CD4-positive, alpha-beta memory T cell (primary cell): ENCODE measurements at regions of chr14 and their contacts with region 1.

Region 1: GRCh38 chr14:63770187-63770807 is 42.4 kb upstream of the SGPP1 start:
- DNase-seq: peak; percentile 59 to 63 (median 60)
- H3K4me3 ChIP-seq: no peak overlapping the region
- H3K4me3 Mint-ChIP-seq: no peak overlapping the region
- H3K27ac ChIP-seq: no peak overlapping the region
- H3K27ac Mint-ChIP-seq: no peak overlapping the region
- H3K4me1 ChIP-seq: no peaks in the 10 kb centered on the region
- H3K4me1 Mint-ChIP-seq: peaks cover 3 to 5% (median 4%) of the 10 kb centered on the region in 4 donors
- H3K27me3 ChIP-seq: no peaks in the 10 kb centered on the region
- H3K27me3 Mint-ChIP-seq: no peaks in the 10 kb centered on the region

Region 2: DNA sequence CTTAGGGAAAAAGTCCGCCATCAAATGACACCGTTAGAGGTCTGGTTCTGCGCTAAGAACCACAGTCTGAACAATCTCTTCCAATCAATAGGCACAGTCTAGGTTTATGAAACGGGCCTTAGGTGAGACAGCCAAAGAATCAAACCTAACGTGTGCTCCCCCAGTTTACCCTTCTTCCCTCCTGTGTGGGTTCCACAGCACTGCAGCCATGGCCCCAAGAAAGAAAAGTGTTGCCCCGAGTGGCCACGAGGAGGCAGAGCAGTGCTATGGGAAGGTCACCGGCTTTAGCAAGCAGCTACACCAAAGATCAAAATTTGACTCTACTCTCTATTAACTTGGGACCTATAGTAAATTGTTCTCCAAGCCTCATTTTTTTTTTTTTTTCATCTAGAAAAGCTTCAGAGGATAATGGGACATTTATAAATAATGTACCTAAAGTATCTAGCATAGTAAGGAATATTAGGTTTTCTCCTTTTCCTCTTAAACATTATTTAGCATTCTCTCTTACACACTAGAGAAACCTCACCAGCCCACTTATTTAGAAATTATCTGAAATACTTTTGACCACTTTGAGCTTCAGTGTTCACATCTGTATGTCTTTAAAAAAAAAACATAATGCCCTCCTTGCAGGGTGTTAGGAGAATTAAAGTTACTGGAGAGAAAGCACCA is 381.4 kb before region 1 on chr14:
- CTCF ChIA-PET with region 1: interaction called, 20 read pairs
- POLR2A ChIA-PET with region 1: interaction called, 4 read pairs
- intact Hi-C with region 1: no loop called
- DNase-seq: peak; percentile 26 to 37 (median 32)
- H3K4me3 ChIP-seq: no peak overlapping the region
- H3K4me3 Mint-ChIP-seq: no peak overlapping the region
- H3K27ac ChIP-seq: no peak overlapping the region
- H3K27ac Mint-ChIP-seq: peak overlapping the region in 1 of 7 donors; percentile 57
- H3K4me1 ChIP-seq: peaks cover 4% of the 10 kb centered on the region
- H3K4me1 Mint-ChIP-seq: peaks cover 0 to 5% (median 1%) of the 10 kb centered on the region in 4 donors
- H3K27me3 ChIP-seq: no peaks in the 10 kb centered on the region
- H3K27me3 Mint-ChIP-seq: no peaks in the 10 kb centered on the region

Region 3: DNA sequence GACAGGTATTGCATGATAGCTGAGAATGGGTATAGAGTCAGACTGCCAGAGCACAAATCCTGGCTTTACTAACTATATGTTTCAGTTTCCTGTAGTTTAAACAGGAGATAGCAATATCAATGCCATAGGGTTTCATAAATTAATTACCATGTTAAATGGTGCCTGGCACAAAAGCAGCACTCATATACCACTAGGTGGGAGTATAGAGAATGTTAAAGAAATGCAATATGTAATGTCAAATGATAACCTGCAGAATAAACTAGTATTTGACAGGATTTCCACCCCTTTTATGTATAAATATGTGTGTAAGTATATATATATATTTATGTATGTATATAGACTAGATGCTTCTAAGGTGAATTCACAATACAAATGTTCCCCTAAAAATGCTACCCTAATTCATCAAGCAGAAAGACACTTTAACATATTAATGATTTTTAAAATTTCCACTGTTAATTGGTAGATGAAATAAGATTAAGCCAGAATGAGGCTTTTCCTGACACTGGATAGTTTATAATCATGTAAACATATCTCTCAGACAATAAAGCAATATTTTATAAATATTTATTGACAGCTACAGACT is 137.3 kb before region 1 on chr14:
- CTCF ChIA-PET with region 1: interaction called, 132 read pairs
- POLR2A ChIA-PET with region 1: interaction called, 5 read pairs
- intact Hi-C with region 1: loop called (anchors 1 kb)
- DNase-seq: peak in 4 of 5 donors; percentile 51 to 57 (median 52)
- H3K4me3 ChIP-seq: no peak overlapping the region
- H3K4me3 Mint-ChIP-seq: no peak overlapping the region
- H3K27ac ChIP-seq: no peak overlapping the region
- H3K27ac Mint-ChIP-seq: peak overlapping the region in 1 of 7 donors; percentile 47
- H3K4me1 ChIP-seq: peaks cover 18% of the 10 kb centered on the region
- H3K4me1 Mint-ChIP-seq: peaks cover 25 to 44% (median 35%) of the 10 kb centered on the region in 4 donors
- H3K27me3 ChIP-seq: no peaks in the 10 kb centered on the region
- H3K27me3 Mint-ChIP-seq: no peaks in the 10 kb centered on the region

Region 4: DNA sequence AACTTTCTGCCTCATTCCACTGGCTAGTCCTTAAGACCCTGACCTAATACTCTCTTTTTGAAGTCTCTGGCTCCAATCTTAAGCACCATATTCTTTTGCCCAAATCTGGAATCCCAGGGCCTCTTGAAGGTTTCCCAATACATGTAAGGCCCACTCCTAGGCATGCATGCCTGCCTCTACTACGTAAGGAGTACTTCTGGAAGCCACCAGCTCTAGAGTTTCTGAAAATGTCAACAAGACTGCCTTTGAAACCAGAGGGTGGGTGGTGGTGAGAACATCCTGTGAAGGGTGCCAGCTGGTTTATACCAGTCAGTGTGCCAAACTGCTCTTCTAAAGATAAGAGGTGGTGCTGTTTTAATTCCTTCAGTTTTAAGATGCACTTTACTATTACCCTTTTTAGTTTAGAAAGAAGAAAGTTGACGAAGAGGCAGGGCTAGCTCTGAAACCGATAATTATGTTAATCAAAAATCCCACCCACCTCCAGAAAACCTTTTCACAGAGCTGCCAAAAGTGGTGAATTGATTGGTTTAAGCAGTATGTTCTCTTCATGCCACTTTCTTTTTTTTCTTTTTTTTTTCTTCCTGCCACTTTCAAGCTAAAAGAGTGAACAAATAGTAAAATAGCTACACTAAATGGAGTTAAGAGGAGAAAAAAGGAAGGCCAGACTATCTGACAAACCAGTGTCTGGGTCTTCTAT is 119.9 kb before region 1 on chr14:
- CTCF ChIA-PET with region 1: interaction called, 19 read pairs
- POLR2A ChIA-PET with region 1: no interaction called
- intact Hi-C with region 1: no loop called
- DNase-seq: peak; percentile 72 to 79 (median 74)
- H3K4me3 ChIP-seq: peak overlapping the region in 1 of 2 donors; percentile 1
- H3K4me3 Mint-ChIP-seq: peak overlapping the region in 7 of 8 donors; percentile 66 to 80 (median 77)
- H3K27ac ChIP-seq: peak overlapping the region; percentile 56
- H3K27ac Mint-ChIP-seq: peak overlapping the region; percentile 92 to 100 (median 97)
- H3K4me1 ChIP-seq: peaks cover 41% of the 10 kb centered on the region
- H3K4me1 Mint-ChIP-seq: peaks cover 19 to 39% (median 29%) of the 10 kb centered on the region in 4 donors
- H3K27me3 ChIP-seq: no peaks in the 10 kb centered on the region
- H3K27me3 Mint-ChIP-seq: no peaks in the 10 kb centered on the region

Region 5: DNA sequence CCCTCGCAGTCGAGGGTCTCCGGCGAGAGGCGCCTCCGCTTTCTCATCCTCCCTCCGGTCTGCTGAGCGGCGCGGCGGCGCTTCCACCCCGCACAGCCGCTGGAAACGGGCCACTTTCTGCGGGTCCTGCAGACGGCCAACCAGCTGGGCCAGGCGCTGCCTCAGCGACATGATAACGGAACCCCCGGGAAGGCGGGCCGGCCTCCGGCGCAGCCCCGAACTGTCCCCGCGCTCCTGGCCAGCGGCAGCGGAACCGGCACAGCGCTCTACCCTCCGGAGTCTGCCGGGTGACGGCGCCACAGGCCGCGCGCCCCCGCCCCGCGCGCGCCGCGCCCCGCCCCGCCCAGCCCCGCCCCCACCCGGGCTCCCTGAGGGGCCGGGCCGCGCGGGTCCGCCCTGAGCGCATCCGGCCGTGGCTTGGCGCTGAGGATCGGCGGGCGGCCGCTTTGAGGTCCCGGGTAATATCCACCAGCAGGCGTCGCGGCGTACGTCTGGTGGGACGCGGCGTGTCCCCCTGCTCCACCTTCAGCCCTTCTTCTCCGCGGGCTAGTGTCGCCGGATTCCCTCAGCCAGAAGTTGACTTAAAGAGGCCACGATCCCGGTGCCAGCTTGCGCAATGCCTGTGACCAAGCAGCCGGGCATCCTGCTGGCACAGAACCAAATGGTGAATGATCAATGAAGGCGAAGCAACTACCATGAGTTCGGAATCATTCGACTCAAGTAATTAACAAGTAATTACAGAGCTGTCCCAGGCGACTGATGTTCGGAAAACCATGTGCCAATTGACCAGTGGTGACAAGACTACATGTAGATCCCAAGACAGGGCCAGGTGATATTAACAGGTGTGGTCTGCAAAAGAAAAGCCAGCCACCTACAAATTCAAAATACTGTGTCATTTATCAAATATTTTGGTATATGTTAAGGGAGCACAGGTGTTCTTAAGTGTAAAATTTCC is 42.2 kb before region 1 on chr14 and contains the start of gene SGPP1:
- CTCF ChIA-PET with region 1: interaction called, 46 read pairs
- POLR2A ChIA-PET with region 1: interaction called, 9 read pairs
- intact Hi-C with region 1: loop called (anchors 1 kb)
- DNase-seq: peak; percentile 81 to 86 (median 83)
- H3K4me3 ChIP-seq: peak within 1 kb of the TSS; percentile 57 to 80
- H3K4me3 Mint-ChIP-seq: peak within 1 kb of the TSS; percentile 98 to 100 (median 99)
- H3K27ac ChIP-seq: peak within 1 kb of the TSS; percentile 68
- H3K27ac Mint-ChIP-seq: peak within 1 kb of the TSS; percentile 86 to 98 (median 97)
- H3K4me1 ChIP-seq: peaks cover 31% of the 10 kb centered on the region
- H3K4me1 Mint-ChIP-seq: peaks cover 25 to 53% (median 43%) of the 10 kb centered on the region in 4 donors
- H3K27me3 ChIP-seq: no peaks in the 10 kb centered on the region
- H3K27me3 Mint-ChIP-seq: no peaks in the 10 kb centered on the region
- total RNA-seq, gene SGPP1: 12.2 to 12.4 TPM

Region 6: DNA sequence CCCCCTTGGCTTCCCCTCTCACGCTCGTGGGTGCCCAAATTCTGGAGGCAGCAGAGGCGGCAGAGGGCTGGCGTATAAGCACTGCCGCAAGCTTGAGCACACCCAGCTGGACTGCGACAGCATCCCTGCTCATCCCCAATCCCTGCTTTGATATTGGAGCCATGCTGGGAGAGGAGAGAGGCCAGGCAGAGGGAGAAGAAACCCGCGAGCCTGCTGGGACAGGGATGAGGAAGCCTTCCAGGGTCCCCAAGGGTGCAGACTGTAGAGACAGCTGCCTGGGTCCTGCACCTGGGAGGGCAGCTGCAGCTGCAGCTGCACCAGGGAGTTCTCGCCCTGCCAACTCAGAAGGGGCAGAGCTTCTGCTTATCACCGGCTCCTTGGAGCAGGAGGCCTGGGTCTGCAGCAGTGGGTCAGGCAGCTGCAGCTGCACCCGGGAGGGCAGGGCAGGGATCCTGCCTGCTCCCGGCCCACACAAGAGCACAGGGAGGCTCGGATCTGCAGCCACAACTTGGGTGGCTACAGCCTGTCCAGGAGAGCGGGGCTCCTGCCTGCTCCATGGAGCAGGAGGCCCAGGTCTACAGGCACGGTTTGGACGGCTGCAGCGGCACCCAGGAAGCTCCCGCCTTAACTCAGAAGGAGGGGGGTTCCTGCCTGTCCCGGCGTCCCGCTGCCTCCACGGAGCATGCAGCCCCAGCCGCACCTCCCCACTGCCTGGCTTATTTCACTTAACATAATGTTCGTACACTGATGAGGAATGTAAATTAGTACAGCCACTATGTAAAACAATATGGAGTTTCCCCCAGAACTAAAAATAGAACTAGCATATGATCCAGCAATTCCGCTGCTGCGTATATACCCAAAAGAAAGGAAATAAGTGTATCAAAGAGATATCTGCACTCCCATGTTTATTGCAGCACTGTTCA is 18.0 kb after region 1 on chr14:
- CTCF ChIA-PET with region 1: interaction called, 11 read pairs
- POLR2A ChIA-PET with region 1: no interaction called
- intact Hi-C with region 1: no loop called
- DNase-seq: no peak
- H3K4me3 ChIP-seq: no peak overlapping the region
- H3K4me3 Mint-ChIP-seq: no peak overlapping the region
- H3K27ac ChIP-seq: no peak overlapping the region
- H3K27ac Mint-ChIP-seq: no peak overlapping the region
- H3K4me1 ChIP-seq: no peaks in the 10 kb centered on the region
- H3K4me1 Mint-ChIP-seq: peaks cover 0 to 2% (median 0%) of the 10 kb centered on the region in 4 donors
- H3K27me3 ChIP-seq: no peaks in the 10 kb centered on the region
- H3K27me3 Mint-ChIP-seq: peaks cover 0 to 11% of the 10 kb centered on the region in 2 donors

Region 7: GRCh38 chr14:63852817-63853731 is 82.8 kb after region 1 on chr14 and contains the start of gene SYNE2:
- CTCF ChIA-PET with region 1: no interaction called
- POLR2A ChIA-PET with region 1: no interaction called
- intact Hi-C with region 1: no loop called
- DNase-seq: peak; percentile 78 to 85 (median 82)
- H3K4me3 ChIP-seq: peak within 1 kb of the TSS; percentile 68 to 72
- H3K4me3 Mint-ChIP-seq: peak within 1 kb of the TSS; percentile 97 to 99 (median 99)
- H3K27ac ChIP-seq: peak within 1 kb of the TSS; percentile 79
- H3K27ac Mint-ChIP-seq: peak within 1 kb of the TSS; percentile 93 to 98 (median 97)
- H3K4me1 ChIP-seq: peaks cover 42% of the 10 kb centered on the region
- H3K4me1 Mint-ChIP-seq: peaks cover 29 to 47% (median 38%) of the 10 kb centered on the region in 4 donors
- H3K27me3 ChIP-seq: no peaks in the 10 kb centered on the region
- H3K27me3 Mint-ChIP-seq: peaks cover 0 to 3% of the 10 kb centered on the region in 2 donors
- total RNA-seq, gene SYNE2: 259 to 280 TPM

Region 8: GRCh38 chr14:63901434-63902085 is 131.3 kb after region 1 on chr14:
- CTCF ChIA-PET with region 1: no interaction called
- POLR2A ChIA-PET with region 1: no interaction called
- intact Hi-C with region 1: no loop called
- DNase-seq: peak in 2 of 5 donors; percentile 6 to 14
- H3K4me3 ChIP-seq: no peak overlapping the region
- H3K4me3 Mint-ChIP-seq: peak overlapping the region in 4 of 8 donors; percentile 40 to 61 (median 52)
- H3K27ac ChIP-seq: no peak overlapping the region
- H3K27ac Mint-ChIP-seq: peak overlapping the region; percentile 17 to 79 (median 53)
- H3K4me1 ChIP-seq: peaks cover 63% of the 10 kb centered on the region
- H3K4me1 Mint-ChIP-seq: peaks cover 46 to 82% (median 67%) of the 10 kb centered on the region in 4 donors
- H3K27me3 ChIP-seq: no peaks in the 10 kb centered on the region
- H3K27me3 Mint-ChIP-seq: no peaks in the 10 kb centered on the region